ENCODE measurements at regions of chr3 and their contacts with region 1.

Region 1: GRCh38 chr3:9731206-9732079 is at the start of gene BRPF1:
- DNase-seq: peak; percentile 100
- H3K4me3 Mint-ChIP-seq: peak within 1 kb of the TSS; percentile 84
- H3K27ac Mint-ChIP-seq: peak within 1 kb of the TSS; percentile 95
- H3K4me1 Mint-ChIP-seq: peaks cover 59% of the 10 kb centered on the region
- H3K27me3 Mint-ChIP-seq: no peaks in the 10 kb centered on the region
- total RNA-seq, gene BRPF1: 16.8 to 19.4 TPM

Region 2: GRCh38 chr3:9362731-9363530 is 368.5 kb before region 1 on chr3 and contains the start of gene THUMPD3:
- CTCF ChIA-PET with region 1: interaction called, 4 read pairs
- intact Hi-C with region 1: loop called (anchors 2 kb)
- DNase-seq: peak; percentile 95
- H3K4me3 Mint-ChIP-seq: peak within 1 kb of the TSS; percentile 98
- H3K27ac Mint-ChIP-seq: peak within 1 kb of the TSS; percentile 99
- H3K4me1 Mint-ChIP-seq: peaks cover 26% of the 10 kb centered on the region
- H3K27me3 Mint-ChIP-seq: no peaks in the 10 kb centered on the region
- total RNA-seq, gene THUMPD3: 46.0 to 48.9 TPM

Region 3: GRCh38 chr3:9715764-9716437 is 15.5 kb before region 1 on chr3:
- CTCF ChIA-PET with region 1: interaction called, 15 read pairs
- intact Hi-C with region 1: no loop called
- DNase-seq: peak; percentile 76
- H3K4me3 Mint-ChIP-seq: no peak overlapping the region
- H3K27ac Mint-ChIP-seq: no peak overlapping the region
- H3K4me1 Mint-ChIP-seq: peaks cover 15% of the 10 kb centered on the region
- H3K27me3 Mint-ChIP-seq: no peaks in the 10 kb centered on the region

Region 4: GRCh38 chr3:9792405-9793160 is 61.1 kb after region 1 on chr3 and contains the starts of genes ARPC4 and TADA3:
- CTCF ChIA-PET with region 1: no interaction called
- intact Hi-C with region 1: loop called (anchors 1 kb)
- DNase-seq: peak; percentile 94
- H3K4me3 Mint-ChIP-seq: peak within 1 kb of the TSS; percentile 94
- H3K27ac Mint-ChIP-seq: peak within 1 kb of the TSS; percentile 100
- H3K4me1 Mint-ChIP-seq: peaks cover 67% of the 10 kb centered on the region
- H3K27me3 Mint-ChIP-seq: no peaks in the 10 kb centered on the region
- total RNA-seq, gene ARPC4: 141 to 144 TPM
- total RNA-seq, gene TADA3: 62.4 to 67.6 TPM

Region 5: DNA sequence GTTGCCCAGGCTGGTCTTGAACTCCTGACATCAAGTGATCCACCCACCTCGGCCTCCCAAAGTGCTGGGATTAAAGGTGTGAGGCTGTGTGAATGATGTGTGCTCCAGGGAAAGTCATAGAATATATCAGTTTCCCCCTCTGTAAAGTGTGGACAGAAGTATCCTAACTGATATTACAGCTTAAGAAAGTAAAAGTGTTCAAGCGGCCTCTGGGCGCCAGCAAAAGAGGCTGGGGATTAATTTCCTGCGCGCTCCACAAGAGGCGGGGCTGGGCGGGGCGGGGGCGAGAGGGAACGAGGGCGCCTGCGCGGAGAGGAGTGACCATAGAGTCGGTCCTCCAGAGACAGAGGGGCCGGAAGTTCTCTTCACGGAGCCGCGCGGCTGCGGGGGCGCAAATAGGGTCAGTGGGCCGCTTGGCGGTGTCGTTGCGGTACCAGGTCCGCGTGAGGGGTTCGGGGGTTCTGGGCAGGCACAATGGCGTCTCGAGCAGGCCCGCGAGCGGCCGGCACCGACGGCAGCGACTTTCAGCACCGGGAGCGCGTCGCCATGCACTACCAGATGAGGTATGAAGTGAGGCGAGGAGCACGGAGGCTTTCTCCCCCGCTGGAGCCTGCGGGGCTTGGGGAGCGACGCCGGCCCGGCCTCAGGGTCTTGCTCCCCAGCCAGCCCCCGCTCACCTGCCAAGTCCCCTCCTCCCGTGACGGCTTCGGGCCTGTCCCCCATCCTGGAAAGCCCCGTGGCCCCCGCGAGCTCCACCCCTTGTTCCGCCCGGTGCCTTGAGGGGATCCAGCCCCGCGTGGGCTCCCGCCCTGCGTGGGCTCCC is 159.0 kb after region 1 on chr3 and contains the start of gene JAGN1:
- CTCF ChIA-PET with region 1: no interaction called
- intact Hi-C with region 1: loop called (anchors 1 kb)
- DNase-seq: peak; percentile 95
- H3K4me3 Mint-ChIP-seq: peak within 1 kb of the TSS; percentile 98
- H3K27ac Mint-ChIP-seq: peak within 1 kb of the TSS; percentile 97
- H3K4me1 Mint-ChIP-seq: peaks cover 43% of the 10 kb centered on the region
- H3K27me3 Mint-ChIP-seq: no peaks in the 10 kb centered on the region
- total RNA-seq, gene JAGN1: 11.7 to 13.6 TPM

Region 6: GRCh38 chr3:10173926-10174435 is 442.5 kb after region 1 on chr3:
- CTCF ChIA-PET with region 1: no interaction called
- intact Hi-C with region 1: no loop called
- DNase-seq: no peak
- H3K4me3 Mint-ChIP-seq: no peak overlapping the region
- H3K27ac Mint-ChIP-seq: no peak overlapping the region
- H3K4me1 Mint-ChIP-seq: peaks cover 22% of the 10 kb centered on the region
- H3K27me3 Mint-ChIP-seq: no peaks in the 10 kb centered on the region